Activated naive CD4-positive, alpha-beta T cell treated with anti-CD3 and anti-CD28 coated beads for 36 hours (primary cell): ENCODE measurements at regions of chr3 and their contacts with region 1.

Region 1: GRCh38 chr3:112303764-112304325 is 9.8 kb upstream of the SLC9C1 start:
- DNase-seq: peak; percentile 52
- H3K4me3 Mint-ChIP-seq: no peak overlapping the region
- H3K27ac Mint-ChIP-seq: no peak overlapping the region
- H3K4me1 Mint-ChIP-seq: no peaks in the 10 kb centered on the region
- H3K27me3 Mint-ChIP-seq: no peaks in the 10 kb centered on the region

Region 2: DNA sequence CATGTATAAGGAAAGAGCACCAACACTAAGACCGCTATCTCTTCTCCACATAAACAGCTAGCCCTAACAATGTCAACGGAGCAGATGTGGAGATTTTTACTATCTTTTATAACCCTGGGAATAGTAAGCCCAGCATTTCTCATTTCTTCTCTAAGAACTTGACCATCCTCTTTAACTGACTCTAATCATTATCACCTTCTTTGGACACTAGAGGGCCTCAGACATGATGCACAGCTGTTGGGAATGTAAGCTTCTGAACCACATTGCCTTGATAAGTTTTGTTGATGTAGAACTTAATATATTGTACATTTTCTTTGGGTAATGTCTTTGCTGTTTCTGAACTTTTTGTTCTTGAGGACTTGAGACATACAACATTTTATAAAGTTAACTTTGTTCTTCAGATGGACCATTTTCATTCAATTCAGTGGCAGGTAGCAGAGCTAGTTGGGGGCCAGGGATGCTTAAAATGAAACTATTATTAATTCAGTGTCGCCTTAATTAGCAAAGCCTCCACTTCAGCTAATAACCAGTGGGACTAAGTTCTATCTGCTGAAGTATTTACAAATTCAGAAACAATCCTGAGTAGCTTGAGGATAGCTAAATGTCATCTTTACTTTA is 314.7 kb before region 1 on chr3:
- CTCF ChIA-PET with region 1: no interaction called
- intact Hi-C with region 1: loop called (anchors 10 kb)
- DNase-seq: no peak
- H3K4me3 Mint-ChIP-seq: no peak overlapping the region
- H3K27ac Mint-ChIP-seq: no peak overlapping the region
- H3K4me1 Mint-ChIP-seq: peaks cover 27% of the 10 kb centered on the region
- H3K27me3 Mint-ChIP-seq: no peaks in the 10 kb centered on the region

Region 3: DNA sequence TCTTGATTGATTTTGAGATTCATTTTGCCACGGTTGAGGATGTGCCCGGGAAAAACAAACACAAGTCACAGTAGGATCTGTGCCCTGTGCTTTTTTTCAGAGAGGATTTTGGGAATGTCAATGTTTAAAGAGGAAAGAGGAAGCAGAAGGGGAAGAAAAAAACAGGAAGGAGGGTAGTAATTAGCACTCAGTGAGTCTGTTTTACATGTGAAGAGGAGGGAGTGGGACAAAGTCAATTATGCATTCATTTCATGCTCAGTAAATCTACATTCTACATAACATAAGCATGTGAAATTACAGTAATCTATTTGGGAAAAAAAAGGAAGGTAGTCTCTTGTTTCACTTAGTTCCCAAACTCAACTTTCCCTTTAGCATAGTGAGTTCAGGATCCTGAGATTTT is 10.8 kb after region 1 on chr3:
- CTCF ChIA-PET with region 1: interaction called, 15 read pairs
- intact Hi-C with region 1: no loop called
- DNase-seq: no peak
- H3K4me3 Mint-ChIP-seq: no peak overlapping the region
- H3K27ac Mint-ChIP-seq: no peak overlapping the region
- H3K4me1 Mint-ChIP-seq: no peaks in the 10 kb centered on the region
- H3K27me3 Mint-ChIP-seq: peaks cover 6% of the 10 kb centered on the region

Region 4: GRCh38 chr3:112321867-112322649 is 18.2 kb after region 1 on chr3:
- CTCF ChIA-PET with region 1: interaction called, 15 read pairs
- intact Hi-C with region 1: no loop called
- DNase-seq: no peak
- H3K4me3 Mint-ChIP-seq: no peak overlapping the region
- H3K27ac Mint-ChIP-seq: no peak overlapping the region
- H3K4me1 Mint-ChIP-seq: peaks cover 13% of the 10 kb centered on the region
- H3K27me3 Mint-ChIP-seq: peaks cover 9% of the 10 kb centered on the region